Activated CD4-positive, alpha-beta T cell treated with anti-CD3 and anti-CD28 coated beads, Interleukin-2, amount 10 ng/mL, durations not matched to agents 7 days and 5 days (primary cell): ENCODE measurements at regions of chr12 and their contacts with region 1.

Region 1: DNA sequence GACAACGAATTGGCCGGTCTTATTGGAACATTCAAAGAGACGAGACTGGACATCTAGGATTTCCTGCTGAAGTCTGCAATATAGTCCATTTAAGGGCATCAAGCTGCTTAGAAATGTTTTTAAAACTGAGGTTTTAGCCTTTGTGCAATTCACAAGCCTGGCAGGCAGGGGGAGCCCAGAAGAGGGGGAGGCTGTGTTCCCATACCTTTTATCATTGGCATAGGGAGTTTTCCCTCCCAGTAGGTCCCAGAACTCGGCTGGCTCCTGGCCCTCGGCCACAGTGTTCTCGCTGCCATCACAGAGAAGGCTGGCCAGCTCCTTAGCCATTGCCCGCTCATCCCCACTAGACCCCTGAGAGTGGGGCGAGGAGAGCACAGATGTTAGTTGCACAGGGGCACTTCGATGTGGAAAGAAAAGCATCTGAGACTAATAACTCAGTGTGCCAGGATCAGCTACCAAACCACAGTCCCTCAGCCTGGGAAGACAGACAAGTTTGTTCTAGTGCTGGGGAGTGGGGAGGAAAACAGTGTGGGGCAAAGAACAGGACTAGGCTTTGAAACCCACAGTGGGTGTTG is 15.1 kb downstream of the AVIL start:
- DNase-seq: peak; percentile 51
- H3K4me3 Mint-ChIP-seq: no peak overlapping the region
- H3K27ac Mint-ChIP-seq: no peak overlapping the region
- H3K4me1 Mint-ChIP-seq: no peaks in the 10 kb centered on the region
- H3K27me3 Mint-ChIP-seq: no peaks in the 10 kb centered on the region

Region 2: DNA sequence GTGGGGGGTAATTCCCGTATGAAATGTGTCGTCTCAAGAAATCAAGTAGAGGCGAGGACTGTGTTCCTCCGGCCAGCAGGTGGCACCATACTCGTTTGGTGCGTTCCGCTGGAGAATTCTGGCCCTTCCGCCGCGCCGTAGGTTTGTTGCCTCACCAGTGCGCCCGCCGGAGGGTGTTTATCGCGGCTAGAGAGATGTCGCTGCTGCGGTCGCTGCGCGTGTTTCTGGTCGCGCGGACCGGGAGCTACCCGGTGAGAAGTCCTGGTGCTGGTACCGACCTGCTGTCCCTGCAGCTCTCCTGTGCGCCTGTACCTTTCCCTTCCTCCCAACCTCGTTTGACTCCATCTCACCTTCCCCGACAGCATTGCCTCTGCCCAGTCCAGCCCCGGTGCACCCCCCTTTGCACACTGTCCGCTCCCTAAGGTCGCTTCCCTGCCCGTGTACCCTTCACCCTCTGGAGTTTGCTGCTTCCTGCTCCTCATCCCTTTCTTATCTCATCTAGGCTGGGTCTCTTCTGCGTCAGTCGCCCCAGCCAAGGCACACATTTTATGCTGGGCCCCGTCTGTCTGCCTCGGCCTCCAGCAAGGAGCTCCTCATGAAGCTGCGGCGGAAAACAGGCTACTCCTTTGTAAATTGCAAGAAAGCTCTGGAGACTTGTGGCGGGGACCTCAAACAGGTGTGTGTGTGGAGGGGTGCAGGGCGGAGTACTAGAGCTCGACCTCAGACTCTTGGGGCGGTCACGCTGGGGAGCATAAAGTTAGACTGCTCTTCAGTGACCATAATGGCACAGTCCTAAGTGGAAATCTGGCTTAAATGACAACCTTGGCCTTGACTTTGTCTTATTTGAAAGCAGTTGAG is 20.6 kb before region 1 on chr12 and contains the start of gene TSFM:
- CTCF ChIA-PET with region 1: interaction called, 14 read pairs
- POLR2A ChIA-PET with region 1: no interaction called
- DNase-seq: peak; percentile 98
- H3K4me3 Mint-ChIP-seq: peak within 1 kb of the TSS; percentile 99
- H3K27ac Mint-ChIP-seq: peak within 1 kb of the TSS; percentile 96
- H3K4me1 Mint-ChIP-seq: peaks cover 42% of the 10 kb centered on the region
- H3K27me3 Mint-ChIP-seq: no peaks in the 10 kb centered on the region
- total RNA-seq, gene TSFM: 23.6 to 29.7 TPM

Region 3: GRCh38 chr12:57817261-57817989 is 14.0 kb after region 1 on chr12:
- CTCF ChIA-PET with region 1: interaction called, 10 read pairs
- POLR2A ChIA-PET with region 1: no interaction called
- DNase-seq: no peak
- H3K4me3 Mint-ChIP-seq: no peak overlapping the region
- H3K27ac Mint-ChIP-seq: no peak overlapping the region
- H3K4me1 Mint-ChIP-seq: no peaks in the 10 kb centered on the region
- H3K27me3 Mint-ChIP-seq: no peaks in the 10 kb centered on the region

Region 4: GRCh38 chr12:57904848-57905811 is 101.7 kb after region 1 on chr12:
- CTCF ChIA-PET with region 1: interaction called, 27 read pairs
- POLR2A ChIA-PET with region 1: no interaction called
- DNase-seq: peak; percentile 86
- H3K4me3 Mint-ChIP-seq: no peak overlapping the region
- H3K27ac Mint-ChIP-seq: peak overlapping the region; percentile 14
- H3K4me1 Mint-ChIP-seq: peaks cover 8% of the 10 kb centered on the region
- H3K27me3 Mint-ChIP-seq: peaks cover 21% of the 10 kb centered on the region